MCF 10A (cell line): ENCODE measurements at regions of chr18 and their contacts with region 1.

Region 1: GRCh38 chr18:63936156-63936931 is 12.8 kb upstream of the HMSD start:
- DNase-seq: peak; percentile 90
- H3K4me3 Mint-ChIP-seq: no peak overlapping the region
- H3K27ac Mint-ChIP-seq: peak overlapping the region; percentile 40
- H3K4me1 Mint-ChIP-seq: no peaks in the 10 kb centered on the region
- H3K27me3 Mint-ChIP-seq: no peaks in the 10 kb centered on the region
- CTCF ChIP-seq: peak; percentile 75

Region 2: GRCh38 chr18:62420513-62421209 is 1515.7 kb before region 1 on chr18:
- CTCF ChIA-PET with region 1: no interaction called
- POLR2A ChIA-PET with region 1: no interaction called
- intact Hi-C with region 1: no loop called
- DNase-seq: peak; percentile 66
- H3K4me3 Mint-ChIP-seq: peak overlapping the region; percentile 47
- H3K27ac Mint-ChIP-seq: peak overlapping the region; percentile 47
- H3K4me1 Mint-ChIP-seq: peaks cover 25% of the 10 kb centered on the region
- H3K27me3 Mint-ChIP-seq: no peaks in the 10 kb centered on the region
- CTCF ChIP-seq: no peak

Region 3: DNA sequence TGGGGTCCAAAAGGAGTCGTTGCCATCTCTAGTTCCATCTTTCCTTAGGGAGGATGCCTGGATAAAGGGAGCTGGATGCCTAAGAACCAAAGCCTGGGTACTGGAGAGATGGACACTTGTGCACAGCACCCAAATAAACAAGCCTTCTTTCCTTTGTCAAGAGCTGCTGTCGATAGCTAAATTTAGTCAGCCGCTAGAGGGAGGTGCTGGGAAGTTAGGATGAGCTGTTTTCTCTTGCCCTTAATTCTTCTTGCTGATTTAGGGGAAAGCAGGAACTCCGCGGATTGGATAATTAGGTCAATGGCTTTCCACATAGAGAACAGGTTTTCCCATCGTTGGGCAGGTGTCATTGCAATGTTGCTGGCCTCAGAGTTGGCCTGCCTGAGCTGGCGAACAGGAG is 425.1 kb before region 1 on chr18:
- CTCF ChIA-PET with region 1: interaction called, 16 read pairs
- POLR2A ChIA-PET with region 1: interaction called, 3 read pairs
- intact Hi-C with region 1: loop called (anchors 2 kb)
- DNase-seq: peak; percentile 75
- H3K4me3 Mint-ChIP-seq: no peak overlapping the region
- H3K27ac Mint-ChIP-seq: no peak overlapping the region
- H3K4me1 Mint-ChIP-seq: peaks cover 6% of the 10 kb centered on the region
- H3K27me3 Mint-ChIP-seq: no peaks in the 10 kb centered on the region
- CTCF ChIP-seq: peak; percentile 39

Region 4: DNA sequence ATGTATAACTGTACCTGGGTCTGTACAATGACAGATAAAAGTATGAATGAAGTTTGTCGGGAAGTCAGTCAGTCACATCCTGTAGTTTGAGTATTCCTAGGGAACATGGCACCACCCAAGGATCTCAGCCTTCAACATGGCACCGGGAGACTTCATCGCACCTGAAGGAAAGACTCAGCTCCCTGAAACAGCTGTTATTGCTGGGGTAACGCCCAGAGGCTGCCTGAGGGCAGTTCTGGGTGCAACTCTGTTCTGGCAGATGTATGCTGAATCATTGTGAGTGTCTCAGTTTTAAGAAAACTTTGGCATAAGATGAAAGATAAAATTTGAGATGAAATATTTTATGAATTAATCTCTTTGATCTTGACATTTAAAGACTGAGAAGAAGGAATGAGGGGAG is 98.8 kb before region 1 on chr18:
- CTCF ChIA-PET with region 1: interaction called, 65 read pairs
- POLR2A ChIA-PET with region 1: no interaction called
- intact Hi-C with region 1: no loop called
- DNase-seq: no peak
- H3K4me3 Mint-ChIP-seq: no peak overlapping the region
- H3K27ac Mint-ChIP-seq: no peak overlapping the region
- H3K4me1 Mint-ChIP-seq: peaks cover 2% of the 10 kb centered on the region
- H3K27me3 Mint-ChIP-seq: no peaks in the 10 kb centered on the region
- CTCF ChIP-seq: no peak

Region 5: DNA sequence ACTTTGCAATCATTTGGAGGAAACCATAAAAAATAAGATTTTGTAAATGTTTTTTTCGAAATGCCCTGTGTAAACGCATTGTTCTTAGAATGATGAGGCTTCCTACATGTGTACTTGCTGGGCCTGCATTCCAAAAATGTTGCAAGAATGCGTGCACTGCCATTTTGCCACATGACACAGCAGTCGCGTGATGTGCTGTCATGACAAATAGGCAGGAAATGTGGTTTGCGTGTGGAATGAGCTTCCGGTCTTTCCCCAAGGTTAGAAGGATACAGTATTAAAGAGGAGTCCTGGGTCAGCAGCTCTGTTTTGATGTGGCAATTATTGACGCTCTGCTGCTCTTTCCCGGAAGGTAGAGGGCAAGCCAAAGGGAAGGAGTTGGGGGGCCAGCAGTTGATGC is 67.0 kb before region 1 on chr18:
- CTCF ChIA-PET with region 1: interaction called, 30 read pairs
- POLR2A ChIA-PET with region 1: interaction called, 4 read pairs
- intact Hi-C with region 1: loop called (anchors 5 kb)
- DNase-seq: peak; percentile 73
- H3K4me3 Mint-ChIP-seq: peak overlapping the region; percentile 10
- H3K27ac Mint-ChIP-seq: peak overlapping the region; percentile 95
- H3K4me1 Mint-ChIP-seq: peaks cover 32% of the 10 kb centered on the region
- H3K27me3 Mint-ChIP-seq: no peaks in the 10 kb centered on the region
- CTCF ChIP-seq: no peak

Region 6: DNA sequence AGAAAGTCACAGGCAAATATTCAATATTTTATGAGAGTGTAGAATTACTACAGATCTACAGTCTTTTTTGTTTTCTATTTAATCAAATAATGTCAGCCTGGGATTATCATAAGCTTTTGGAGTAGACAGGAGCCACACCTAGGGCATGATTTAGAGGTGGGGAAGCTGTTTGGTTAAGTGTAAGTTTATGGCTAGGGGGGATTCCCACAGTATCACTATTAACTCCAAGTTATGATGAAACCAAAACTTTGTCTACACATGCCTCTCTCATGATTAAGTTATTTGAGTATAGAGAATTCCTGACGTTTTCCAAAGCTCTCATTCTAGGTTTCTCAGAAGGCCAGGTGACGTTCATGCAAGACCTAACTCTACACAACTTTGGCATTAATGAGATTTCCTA is 26.5 kb before region 1 on chr18:
- CTCF ChIA-PET with region 1: interaction called, 14 read pairs
- POLR2A ChIA-PET with region 1: interaction called, 9 read pairs
- intact Hi-C with region 1: no loop called
- DNase-seq: peak; percentile 2
- H3K4me3 Mint-ChIP-seq: no peak overlapping the region
- H3K27ac Mint-ChIP-seq: no peak overlapping the region
- H3K4me1 Mint-ChIP-seq: no peaks in the 10 kb centered on the region
- H3K27me3 Mint-ChIP-seq: no peaks in the 10 kb centered on the region
- CTCF ChIP-seq: no peak

Region 7: GRCh38 chr18:63979409-63979920 is 43.1 kb after region 1 on chr18:
- CTCF ChIA-PET with region 1: interaction called, 15 read pairs
- POLR2A ChIA-PET with region 1: no interaction called
- intact Hi-C with region 1: no loop called
- DNase-seq: peak; percentile 62
- H3K4me3 Mint-ChIP-seq: peak overlapping the region; percentile 19
- H3K27ac Mint-ChIP-seq: peak overlapping the region; percentile 46
- H3K4me1 Mint-ChIP-seq: peaks cover 19% of the 10 kb centered on the region
- H3K27me3 Mint-ChIP-seq: no peaks in the 10 kb centered on the region
- CTCF ChIP-seq: peak; percentile 74

Region 8: DNA sequence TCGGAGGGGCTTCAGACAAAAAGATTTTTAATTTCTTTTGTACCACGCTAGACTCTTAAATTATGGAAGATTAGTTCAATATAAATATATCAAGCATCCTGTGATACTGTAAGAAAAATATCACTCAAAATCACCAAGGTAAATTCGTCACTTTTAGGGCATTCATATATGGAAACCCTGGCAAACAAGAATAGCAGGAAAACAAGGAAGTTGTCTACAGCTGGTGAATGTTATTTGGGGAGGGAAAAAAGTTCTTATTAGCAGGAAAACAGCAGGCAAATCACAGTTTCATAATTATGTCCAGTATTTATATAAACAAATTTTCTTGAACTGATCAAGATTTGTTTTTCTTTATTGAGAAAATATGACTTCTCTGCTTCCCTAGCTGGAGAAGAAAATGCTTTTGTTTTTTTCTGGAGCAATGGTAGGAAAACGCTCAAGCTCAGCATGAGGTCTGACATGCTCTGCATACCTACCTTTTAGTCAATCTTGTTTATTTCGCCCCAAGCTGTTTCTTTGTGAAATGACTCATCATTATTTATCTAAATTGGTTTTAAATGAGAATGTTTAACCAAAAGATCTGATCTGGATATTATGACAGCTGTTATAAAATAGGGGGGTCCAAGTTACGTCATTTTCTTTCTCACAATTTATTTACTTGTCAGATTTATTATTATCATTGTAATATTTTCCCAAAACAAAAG is 197.9 kb after region 1 on chr18:
- CTCF ChIA-PET with region 1: no interaction called
- POLR2A ChIA-PET with region 1: no interaction called
- intact Hi-C with region 1: no loop called
- DNase-seq: peak; percentile 54
- H3K4me3 Mint-ChIP-seq: no peak overlapping the region
- H3K27ac Mint-ChIP-seq: no peak overlapping the region
- H3K4me1 Mint-ChIP-seq: no peaks in the 10 kb centered on the region
- H3K27me3 Mint-ChIP-seq: peaks cover 76% of the 10 kb centered on the region
- CTCF ChIP-seq: no peak